Heart right ventricle (tissue), 16 donors: ENCODE measurements at regions of chr7 and their contacts with region 1.

Region 1: DNA sequence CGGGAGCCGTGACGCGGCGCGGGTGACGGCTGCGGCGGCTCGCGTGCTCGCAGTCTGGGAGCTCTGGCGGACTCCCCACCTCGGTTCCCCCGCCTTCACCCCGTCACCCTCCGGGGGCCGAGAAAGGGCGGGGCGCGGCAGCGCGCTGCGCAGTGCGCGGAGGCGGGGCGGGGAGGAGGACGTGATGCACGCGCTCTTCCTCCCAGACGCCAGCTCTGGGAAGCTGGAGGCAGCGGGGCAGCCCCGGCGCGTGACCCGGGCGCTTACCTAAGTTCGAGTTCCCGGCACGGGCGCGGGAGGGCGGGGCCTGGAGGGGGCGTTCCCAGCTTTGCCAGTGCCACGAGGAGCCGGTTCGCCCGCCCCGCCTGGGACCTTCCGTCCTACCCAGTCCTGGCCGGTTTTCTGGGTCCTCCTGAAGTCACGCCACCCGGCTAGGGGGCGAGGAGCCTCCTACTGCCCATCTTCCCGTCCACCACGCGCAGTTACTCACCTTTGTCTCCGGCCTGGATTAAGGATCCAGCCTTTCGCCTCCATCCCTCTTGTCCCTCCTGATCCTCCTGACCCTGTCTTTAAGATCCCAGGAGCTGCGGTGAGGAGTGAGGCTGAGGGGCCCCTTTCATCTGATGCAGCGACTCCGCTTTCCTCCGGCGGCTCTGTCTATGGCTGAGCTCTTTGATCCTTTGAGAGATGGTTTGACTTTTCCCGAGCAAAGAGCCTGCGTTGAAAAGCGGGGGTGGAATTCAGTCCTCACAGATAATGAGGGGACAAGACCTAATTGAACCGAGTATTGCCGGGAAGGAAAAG is 470 bp upstream of the NAMPT start:
- DNase-seq: peak; percentile 96 to 97
- ATAC-seq: peak; percentile 95 to 99 (median 96)
- H3K4me3 ChIP-seq: peak overlapping the region; percentile 60 to 80 (median 75)
- H3K27ac ChIP-seq: peak overlapping the region; percentile 86 to 99 (median 96)
- H3K4me1 ChIP-seq: peaks cover 0 to 44% (median 25%) of the 10 kb centered on the region in 9 donors
- H3K27me3 ChIP-seq: no peaks in the 10 kb centered on the region
- CTCF ChIP-seq: peak in 1 of 9 donors; percentile 24

Region 2: DNA sequence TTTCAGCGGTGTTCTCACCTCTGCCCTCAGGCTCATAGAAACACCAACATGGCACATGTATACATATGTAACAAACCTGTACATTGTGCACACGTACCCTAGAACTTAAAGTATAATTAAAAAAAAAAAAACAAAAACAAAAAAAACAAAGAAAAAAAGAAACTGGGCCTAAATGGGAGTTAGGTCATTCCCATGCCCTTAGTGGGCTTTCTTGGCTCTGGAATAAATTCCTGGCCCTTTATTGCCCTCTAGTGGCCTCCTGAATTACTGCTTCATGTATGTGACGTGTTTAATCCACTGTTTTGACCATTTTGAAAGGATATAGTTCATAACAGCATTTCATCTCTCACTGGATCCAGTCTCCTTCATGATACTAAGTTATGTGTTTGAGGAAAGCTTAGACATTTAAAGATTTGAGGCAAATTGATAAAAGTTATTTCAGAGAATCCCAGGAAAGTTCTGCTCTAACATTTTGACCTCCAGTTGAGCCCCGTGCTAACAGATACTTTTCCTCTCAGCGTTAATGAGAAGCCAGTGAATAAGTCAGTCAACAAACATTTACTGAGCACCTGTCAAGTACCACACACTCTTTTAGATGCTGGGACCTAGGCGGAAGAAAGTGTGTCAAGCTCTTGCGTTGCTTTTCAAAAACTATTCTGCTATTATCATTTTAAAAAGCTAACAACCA is 118.5 kb before region 1 on chr7:
- intact Hi-C with region 1: no loop called
- DNase-seq: peak in 1 of 2 donors; percentile 75
- ATAC-seq: peak in 7 of 8 donors; percentile 59 to 88 (median 78)
- H3K4me3 ChIP-seq: no peak overlapping the region
- H3K27ac ChIP-seq: peak overlapping the region in 6 of 10 donors; percentile 1 to 37 (median 24)
- H3K4me1 ChIP-seq: peaks cover 0 to 23% (median 5%) of the 10 kb centered on the region in 9 donors
- H3K27me3 ChIP-seq: no peaks in the 10 kb centered on the region
- CTCF ChIP-seq: peak; percentile 77 to 90 (median 85)

Region 3: DNA sequence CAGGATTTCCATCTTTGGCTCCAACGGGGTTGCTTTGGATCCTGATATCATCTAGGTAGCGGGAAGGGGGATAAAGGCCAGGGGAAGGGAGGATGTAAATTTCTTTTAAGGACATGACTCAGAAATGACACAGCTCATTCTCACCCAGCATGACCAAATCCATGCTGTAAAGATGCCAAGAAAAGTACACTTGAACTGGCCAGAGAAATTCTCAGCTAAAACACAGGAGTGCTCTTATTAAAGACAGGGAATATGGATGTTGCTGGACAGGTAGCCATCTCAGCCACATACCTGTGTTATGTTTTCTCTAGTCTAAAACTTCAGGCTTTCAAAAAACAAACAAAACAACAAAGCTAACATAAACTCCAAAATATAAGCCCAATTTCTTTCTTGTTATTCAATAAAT is 68.7 kb before region 1 on chr7:
- intact Hi-C with region 1: loop called in 7 of 10 experiments (anchors 2 to 5 kb)
- DNase-seq: peak in 1 of 2 donors; percentile 51
- ATAC-seq: peak; percentile 66 to 93 (median 92)
- H3K4me3 ChIP-seq: peak overlapping the region in 5 of 10 donors; percentile 1 to 34 (median 24)
- H3K27ac ChIP-seq: peak overlapping the region; percentile 72 to 93 (median 84)
- H3K4me1 ChIP-seq: peaks cover 18 to 39% (median 36%) of the 10 kb centered on the region in 9 donors
- H3K27me3 ChIP-seq: no peaks in the 10 kb centered on the region
- CTCF ChIP-seq: no peak

Region 4: DNA sequence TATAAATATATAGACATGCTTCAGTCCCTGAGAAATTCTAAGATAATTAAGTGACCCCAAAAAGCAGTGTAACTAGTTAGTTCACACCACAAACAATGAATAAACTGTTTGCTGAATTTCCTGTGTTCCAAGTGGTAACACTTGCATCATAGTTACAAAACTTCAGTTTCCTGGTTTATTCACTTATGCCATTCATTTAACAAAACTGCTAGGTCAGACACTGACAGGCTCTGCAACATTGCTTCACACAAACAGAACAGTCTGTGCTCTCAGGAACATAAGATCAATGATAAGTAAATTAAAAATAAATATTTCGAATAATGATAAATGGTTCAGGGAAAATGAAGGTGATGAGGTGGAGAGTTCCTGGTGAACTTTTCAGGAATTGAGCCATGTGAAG is 132.8 kb after region 1 on chr7:
- intact Hi-C with region 1: loop called in 2 of 10 experiments (anchors 5 to 10 kb)
- DNase-seq: no peak
- ATAC-seq: peak in 3 of 8 donors; percentile 40 to 63 (median 50)
- H3K4me3 ChIP-seq: no peak overlapping the region
- H3K27ac ChIP-seq: peak overlapping the region in 2 of 10 donors; percentile 58 to 93
- H3K4me1 ChIP-seq: peaks cover 0 to 68% (median 18%) of the 10 kb centered on the region in 9 donors
- H3K27me3 ChIP-seq: no peaks in the 10 kb centered on the region
- CTCF ChIP-seq: no peak

Region 5: GRCh38 chr7:106461993-106462859 is 177.0 kb after region 1 on chr7:
- intact Hi-C with region 1: loop called in 4 of 10 experiments (anchors 5 to 10 kb)
- DNase-seq: no peak
- ATAC-seq: peak in 4 of 8 donors; percentile 30 to 42 (median 38)
- H3K4me3 ChIP-seq: no peak overlapping the region
- H3K27ac ChIP-seq: peak overlapping the region in 1 of 10 donors; percentile 58
- H3K4me1 ChIP-seq: peaks cover 0 to 20% (median 3%) of the 10 kb centered on the region in 9 donors
- H3K27me3 ChIP-seq: no peaks in the 10 kb centered on the region
- CTCF ChIP-seq: peak; percentile 34 to 76 (median 65)

Region 6: DNA sequence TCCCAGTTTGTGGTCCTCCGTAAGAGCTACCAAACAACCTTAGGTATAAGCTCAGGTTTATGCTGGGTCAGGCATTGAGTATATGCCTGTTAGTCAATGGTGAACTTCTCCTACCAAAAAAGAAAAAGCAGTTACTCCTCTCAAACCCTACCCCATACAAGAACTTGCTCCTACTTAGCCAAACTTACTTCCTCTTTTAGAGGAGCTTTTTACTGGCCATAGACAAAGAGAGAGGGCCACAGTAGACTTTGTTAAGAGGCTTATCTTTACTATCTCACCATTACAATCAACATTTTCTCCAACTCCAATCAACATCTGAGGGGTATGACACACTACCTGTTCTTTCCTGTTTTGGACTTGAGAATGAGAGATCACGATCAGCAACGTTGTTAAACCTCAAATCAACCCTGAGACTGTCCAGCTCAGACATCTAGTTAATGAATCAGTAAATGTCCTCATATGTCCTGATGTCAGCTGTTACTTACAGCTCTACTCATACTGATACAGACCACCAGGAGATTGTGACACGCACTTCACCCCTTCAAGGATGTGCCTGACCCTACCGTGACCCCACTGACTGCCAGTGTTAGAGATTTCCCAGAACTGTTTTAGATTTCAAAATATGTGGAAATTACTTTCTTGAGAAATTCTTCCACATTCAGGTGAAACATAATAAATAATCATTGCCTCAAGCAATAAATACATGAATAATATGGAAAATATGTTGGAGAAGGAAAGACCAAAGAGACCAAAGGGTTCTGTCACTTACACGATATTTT is 394.1 kb after region 1 on chr7:
- intact Hi-C with region 1: no loop called
- DNase-seq: no peak
- ATAC-seq: peak in 1 of 8 donors; percentile 42
- H3K4me3 ChIP-seq: no peak overlapping the region
- H3K27ac ChIP-seq: no peak overlapping the region
- H3K4me1 ChIP-seq: peaks cover 0 to 12% (median 0%) of the 10 kb centered on the region in 9 donors
- H3K27me3 ChIP-seq: no peaks in the 10 kb centered on the region
- CTCF ChIP-seq: no peak

Region 7: DNA sequence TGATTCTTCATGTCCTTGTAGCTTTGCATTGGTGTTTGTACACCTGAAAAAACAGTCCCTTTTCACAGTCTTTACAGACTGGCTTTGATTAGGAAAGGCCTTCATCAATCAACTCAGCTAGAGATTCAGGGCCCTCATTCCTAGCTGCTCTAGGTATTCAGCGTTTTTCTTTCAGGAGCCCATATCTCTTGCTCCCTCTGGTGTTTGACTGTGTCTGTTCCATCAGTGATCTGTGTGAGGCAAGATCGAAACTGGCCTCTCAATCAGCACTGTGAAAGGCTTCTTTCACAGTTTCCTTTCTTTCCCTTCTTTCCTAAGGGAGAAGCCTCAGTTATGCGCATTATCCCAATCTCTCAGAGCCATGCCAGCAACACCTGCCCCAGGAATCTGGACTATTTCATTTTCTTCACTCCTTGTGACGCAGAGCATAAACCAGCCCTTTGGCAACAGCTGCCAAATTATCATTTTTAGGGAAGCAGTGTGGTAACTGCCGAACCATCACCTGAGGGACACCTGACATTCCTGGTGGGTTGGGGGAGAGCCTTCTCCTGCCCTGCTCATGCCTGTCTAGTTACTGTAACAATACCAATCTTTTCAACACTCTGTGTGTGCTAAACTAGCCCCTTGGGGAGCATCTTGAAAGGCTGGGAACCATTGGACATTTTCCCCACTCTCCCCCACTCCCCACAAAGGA is 451.4 kb after region 1 on chr7:
- intact Hi-C with region 1: loop called in 2 of 10 experiments (anchors 5 to 10 kb)
- DNase-seq: peak in 1 of 2 donors; percentile 46
- ATAC-seq: peak in 6 of 8 donors; percentile 78 to 89 (median 84)
- H3K4me3 ChIP-seq: no peak overlapping the region
- H3K27ac ChIP-seq: no peak overlapping the region
- H3K4me1 ChIP-seq: peaks cover 0 to 18% (median 6%) of the 10 kb centered on the region in 9 donors
- H3K27me3 ChIP-seq: peaks cover 0 to under 1% (median 0%) of the 10 kb centered on the region in 7 donors
- CTCF ChIP-seq: peak; percentile 20 to 81 (median 64)

Region 8: GRCh38 chr7:106927536-106927935 is 642.3 kb after region 1 on chr7:
- intact Hi-C with region 1: no loop called
- DNase-seq: no peak
- ATAC-seq: no peak
- H3K4me3 ChIP-seq: no peak overlapping the region
- H3K27ac ChIP-seq: no peak overlapping the region
- H3K4me1 ChIP-seq: no peaks in the 10 kb centered on the region
- H3K27me3 ChIP-seq: no peaks in the 10 kb centered on the region
- CTCF ChIP-seq: no peak